Activated CD8-positive, alpha-beta T cell treated with anti-CD3 and anti-CD28 coated beads, Interleukin-2, amount 10 ng/mL, durations not matched to agents 7 days and 5 days (primary cell): ENCODE measurements at regions of chr2 and their contacts with region 1.

Region 1: GRCh38 chr2:230866756-230867523 is 2.2 kb downstream of the ITM2C start:
- DNase-seq: peak; percentile 58
- ATAC-seq: no peak
- H3K4me3 Mint-ChIP-seq: peak overlapping the region; percentile 37
- H3K27ac Mint-ChIP-seq: peak overlapping the region; percentile 78
- H3K4me1 Mint-ChIP-seq: peaks cover 49% of the 10 kb centered on the region
- H3K27me3 Mint-ChIP-seq: peaks cover 10% of the 10 kb centered on the region

Region 2: GRCh38 chr2:230877732-230878598 is 11.0 kb after region 1 on chr2:
- CTCF ChIA-PET with region 1: interaction called, 18 read pairs
- POLR2A ChIA-PET with region 1: interaction called, 6 read pairs
- DNase-seq: peak; percentile 83
- ATAC-seq: peak; percentile 90
- H3K4me3 Mint-ChIP-seq: peak overlapping the region; percentile 32
- H3K27ac Mint-ChIP-seq: peak overlapping the region; percentile 91
- H3K4me1 Mint-ChIP-seq: peaks cover 56% of the 10 kb centered on the region
- H3K27me3 Mint-ChIP-seq: no peaks in the 10 kb centered on the region

Region 3: GRCh38 chr2:230942920-230943896 is 76.3 kb after region 1 on chr2:
- CTCF ChIA-PET with region 1: no interaction called
- POLR2A ChIA-PET with region 1: no interaction called
- DNase-seq: peak; percentile 75
- ATAC-seq: peak; percentile 81
- H3K4me3 Mint-ChIP-seq: peak overlapping the region; percentile 54
- H3K27ac Mint-ChIP-seq: peak overlapping the region; percentile 62
- H3K4me1 Mint-ChIP-seq: peaks cover 48% of the 10 kb centered on the region
- H3K27me3 Mint-ChIP-seq: no peaks in the 10 kb centered on the region